ENCODE measurements at regions of chr16 and their contacts with region 1.

Region 1: DNA sequence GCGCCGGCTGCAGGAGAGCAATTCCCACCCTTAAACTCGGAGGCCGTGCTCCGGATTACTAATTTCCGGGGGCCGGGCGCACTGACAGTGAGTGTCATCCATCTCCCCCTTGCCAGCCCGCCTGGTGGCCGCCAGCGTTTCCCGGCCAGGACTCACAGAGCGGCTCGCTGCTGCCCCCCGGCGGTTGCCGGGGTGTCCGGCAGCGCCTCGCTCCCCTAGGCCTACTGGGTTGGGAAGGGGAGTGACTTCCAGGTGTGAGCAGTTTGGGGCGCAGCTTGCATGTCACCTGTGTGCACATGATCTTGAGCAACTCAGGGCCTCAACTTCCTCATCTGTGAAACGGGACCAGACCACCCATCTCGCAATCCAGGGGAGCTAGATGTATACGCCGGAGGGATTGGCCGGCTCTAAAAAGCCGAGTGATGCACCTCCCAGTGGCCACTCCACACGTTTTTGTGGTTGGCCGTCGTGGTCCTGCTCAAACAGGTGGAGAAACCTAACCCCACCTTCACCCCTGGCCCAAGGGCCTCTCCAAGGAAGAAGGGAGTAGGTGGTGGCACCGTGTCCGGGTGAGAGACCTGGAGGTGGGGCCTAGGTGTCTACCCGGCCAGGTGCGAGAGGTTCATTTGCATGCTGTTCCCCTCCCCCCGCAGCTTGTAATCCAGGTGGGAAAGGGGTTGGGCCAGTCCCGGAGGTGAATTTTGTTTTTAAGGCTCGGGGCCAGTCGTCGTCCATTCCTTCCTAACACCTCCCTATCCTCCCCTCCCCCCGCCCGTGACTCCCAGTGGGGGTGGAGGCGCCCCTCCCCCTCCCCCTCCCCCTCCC is 2.4 kb upstream of the GSE1 start:
- DNase-seq: peak; percentile 91
- H3K4me3 Mint-ChIP-seq: peak overlapping the region; percentile 65
- H3K27ac Mint-ChIP-seq: no peak overlapping the region
- H3K4me1 Mint-ChIP-seq: peaks cover 21% of the 10 kb centered on the region
- H3K27me3 Mint-ChIP-seq: peaks cover 6% of the 10 kb centered on the region

Region 2: GRCh38 chr16:85369741-85370528 is 240.8 kb before region 1 on chr16:
- CTCF ChIA-PET with region 1: no interaction called
- intact Hi-C with region 1: loop called (anchors 1 kb)
- DNase-seq: peak; percentile 69
- H3K4me3 Mint-ChIP-seq: no peak overlapping the region
- H3K27ac Mint-ChIP-seq: no peak overlapping the region
- H3K4me1 Mint-ChIP-seq: no peaks in the 10 kb centered on the region
- H3K27me3 Mint-ChIP-seq: no peaks in the 10 kb centered on the region

Region 3: DNA sequence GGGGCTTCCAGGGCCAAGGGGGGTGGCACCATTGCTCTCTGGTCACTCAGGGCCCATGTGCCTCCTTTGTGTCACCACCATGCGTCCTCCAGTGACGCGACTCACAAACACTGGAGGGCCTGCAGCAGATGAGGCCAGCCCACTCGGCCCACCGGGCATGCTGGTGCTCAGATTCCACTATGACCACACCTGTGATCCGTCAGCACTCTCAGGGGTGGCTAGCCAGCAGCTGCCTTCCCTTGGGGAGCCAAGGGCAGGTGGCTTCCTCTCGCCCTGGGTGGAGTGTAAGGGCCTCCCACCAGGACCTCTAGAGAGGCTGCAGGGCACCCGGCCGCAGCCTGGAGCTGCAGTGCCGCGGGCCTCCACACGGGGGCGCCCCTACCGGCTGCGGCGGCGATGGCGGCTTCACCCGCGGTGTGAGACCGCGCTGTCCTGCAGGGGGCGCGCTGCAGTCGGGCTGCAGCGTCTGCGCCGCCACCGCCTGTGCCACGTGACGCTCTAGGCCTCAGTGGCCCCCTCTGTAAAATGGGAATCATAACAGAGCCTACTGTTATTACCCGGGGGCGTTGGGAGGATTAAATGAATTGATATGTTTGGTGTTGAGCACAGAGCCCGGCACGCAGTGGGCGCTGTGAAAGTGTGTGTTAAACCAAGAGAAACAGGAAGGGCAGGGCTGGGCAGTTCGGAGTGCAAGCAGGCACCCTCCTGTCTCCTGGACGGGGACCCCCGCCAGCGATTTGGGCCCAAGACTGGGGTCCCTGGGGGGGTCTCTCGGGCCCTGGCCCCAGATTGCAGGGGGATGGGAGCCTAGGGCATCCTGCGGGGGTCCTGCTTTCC is 190.0 kb before region 1 on chr16:
- CTCF ChIA-PET with region 1: interaction called, 55 read pairs
- intact Hi-C with region 1: loop called (anchors 1 kb)
- DNase-seq: peak; percentile 71
- H3K4me3 Mint-ChIP-seq: no peak overlapping the region
- H3K27ac Mint-ChIP-seq: no peak overlapping the region
- H3K4me1 Mint-ChIP-seq: peaks cover 4% of the 10 kb centered on the region
- H3K27me3 Mint-ChIP-seq: no peaks in the 10 kb centered on the region

Region 4: GRCh38 chr16:85448557-85449197 is 162.0 kb before region 1 on chr16:
- CTCF ChIA-PET with region 1: interaction called, 16 read pairs
- intact Hi-C with region 1: no loop called
- DNase-seq: peak; percentile 55
- H3K4me3 Mint-ChIP-seq: no peak overlapping the region
- H3K27ac Mint-ChIP-seq: no peak overlapping the region
- H3K4me1 Mint-ChIP-seq: peaks cover 42% of the 10 kb centered on the region
- H3K27me3 Mint-ChIP-seq: no peaks in the 10 kb centered on the region

Region 5: DNA sequence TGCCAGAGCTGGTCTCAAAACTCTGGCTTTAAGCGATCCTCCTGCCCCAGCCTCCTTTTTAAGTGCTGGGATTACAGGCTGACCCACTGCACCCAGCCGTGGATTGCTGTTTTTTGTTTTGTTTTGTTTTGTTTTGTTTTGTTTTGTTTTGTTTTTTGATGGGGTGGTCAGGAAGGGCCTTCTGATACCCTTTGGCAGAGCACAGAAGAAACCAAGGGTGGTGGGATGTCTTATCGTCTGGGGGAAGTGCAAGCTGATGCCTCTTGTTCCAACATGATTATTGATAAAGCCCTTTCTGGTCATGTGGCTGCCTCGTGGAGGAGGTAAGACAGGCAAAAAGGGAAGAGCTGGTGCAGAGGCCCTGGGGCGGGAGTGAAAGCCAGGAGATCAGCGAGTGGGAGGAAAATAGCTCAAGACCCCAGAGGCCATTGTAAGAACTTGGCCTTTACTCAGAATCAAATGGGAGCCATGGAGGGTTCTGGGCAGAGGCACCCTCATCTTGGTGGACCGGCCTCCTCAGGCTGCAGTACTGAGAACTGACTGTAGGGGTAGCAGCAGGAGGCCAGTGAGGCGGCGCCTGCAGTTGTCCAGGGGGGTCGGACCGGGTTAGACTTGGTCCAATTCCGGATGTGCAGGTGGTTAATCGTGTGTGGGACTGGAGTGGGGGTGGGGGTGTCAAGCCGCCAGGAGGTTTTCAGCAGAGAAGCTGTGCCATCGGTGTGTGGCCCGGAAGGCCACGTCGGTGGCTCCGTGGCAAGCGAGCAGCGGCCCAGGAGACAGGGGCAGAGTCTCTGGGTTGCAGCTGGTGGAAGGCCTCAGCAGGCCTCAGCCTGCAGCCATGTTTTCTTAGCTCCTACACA is 82.0 kb before region 1 on chr16:
- CTCF ChIA-PET with region 1: interaction called, 16 read pairs
- intact Hi-C with region 1: loop called (anchors 1 kb)
- DNase-seq: peak; percentile 31
- H3K4me3 Mint-ChIP-seq: no peak overlapping the region
- H3K27ac Mint-ChIP-seq: peak overlapping the region; percentile 30
- H3K4me1 Mint-ChIP-seq: no peaks in the 10 kb centered on the region
- H3K27me3 Mint-ChIP-seq: no peaks in the 10 kb centered on the region

Region 6: DNA sequence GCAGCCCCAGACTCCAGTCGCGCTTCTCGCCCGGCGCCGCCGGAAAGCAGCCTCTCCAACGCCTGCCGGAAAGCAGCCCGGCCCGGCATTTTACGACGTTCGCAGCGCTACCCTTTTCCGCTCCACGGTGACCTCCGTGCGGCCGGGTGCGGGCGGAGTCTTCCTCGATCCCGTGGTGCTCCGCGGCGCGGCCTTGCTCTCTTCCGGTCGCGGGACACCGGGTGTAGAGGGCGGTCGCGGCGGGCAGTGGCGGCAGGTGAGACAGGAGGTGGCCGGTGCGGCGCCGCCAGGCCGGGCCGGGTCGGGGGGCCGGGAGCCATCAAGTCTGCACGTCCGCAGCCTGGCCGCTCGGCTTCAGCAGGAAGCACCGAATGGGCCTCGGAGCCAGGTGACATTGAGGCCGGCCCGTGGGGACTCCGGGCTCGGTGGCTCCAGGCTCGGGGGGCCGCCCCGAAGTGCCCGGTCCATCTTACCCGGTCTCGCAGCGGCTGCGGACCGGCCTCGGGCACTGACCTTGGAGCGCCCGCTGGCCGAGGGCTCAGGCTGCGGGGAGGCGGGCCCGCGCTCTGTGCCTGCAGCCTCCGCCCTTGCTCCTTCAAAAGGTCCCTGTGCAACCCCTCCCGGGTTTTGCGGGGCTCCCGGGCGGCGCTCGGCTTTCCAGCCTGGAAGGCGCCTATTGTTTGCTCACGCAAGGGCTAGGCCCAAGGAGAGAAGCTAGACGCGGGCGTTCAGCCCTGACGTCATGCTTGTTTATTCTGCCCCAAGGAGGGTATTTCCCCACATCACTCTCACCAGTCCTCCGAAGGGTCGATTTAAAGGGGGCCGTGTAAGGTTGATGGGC is 189.0 kb after region 1 on chr16 and contains the starts of genes COX4I1 and EMC8:
- CTCF ChIA-PET with region 1: no interaction called
- intact Hi-C with region 1: loop called (anchors 2 kb)
- DNase-seq: peak; percentile 97
- H3K4me3 Mint-ChIP-seq: peak within 1 kb of the TSS; percentile 86
- H3K27ac Mint-ChIP-seq: peak within 1 kb of the TSS; percentile 88
- H3K4me1 Mint-ChIP-seq: peaks cover 56% of the 10 kb centered on the region
- H3K27me3 Mint-ChIP-seq: no peaks in the 10 kb centered on the region
- total RNA-seq, gene COX4I1: 563 to 568 TPM
- total RNA-seq, gene EMC8: 28.5 to 31.6 TPM

Measured in activated naive CD4-positive, alpha-beta T cell treated with anti-CD3 and anti-CD28 coated beads for 36 hours (primary cell).